ENCODE measurements at regions of chr22 and their contacts with region 1.

Region 1: GRCh38 chr22:40818747-40819598 is at the start of gene SLC25A17:
- DNase-seq: peak; percentile 72 to 93 (median 88)
- ATAC-seq: peak; percentile 88
- H3K4me3 ChIP-seq: peak within 1 kb of the TSS; percentile 87 to 91
- H3K4me3 Mint-ChIP-seq: peak within 1 kb of the TSS; percentile 96
- H3K27ac ChIP-seq: peak within 1 kb of the TSS; percentile 69 to 81
- H3K27ac Mint-ChIP-seq: peak within 1 kb of the TSS; percentile 88
- H3K4me1 ChIP-seq: peaks cover 18% of the 10 kb centered on the region
- H3K4me1 Mint-ChIP-seq: peaks cover 41% of the 10 kb centered on the region
- H3K27me3 ChIP-seq: no peaks in the 10 kb centered on the region
- H3K27me3 Mint-ChIP-seq: no peaks in the 10 kb centered on the region
- CTCF ChIP-seq: no peak
- total RNA-seq, gene SLC25A17: 3.2 to 4.0 TPM

Region 2: DNA sequence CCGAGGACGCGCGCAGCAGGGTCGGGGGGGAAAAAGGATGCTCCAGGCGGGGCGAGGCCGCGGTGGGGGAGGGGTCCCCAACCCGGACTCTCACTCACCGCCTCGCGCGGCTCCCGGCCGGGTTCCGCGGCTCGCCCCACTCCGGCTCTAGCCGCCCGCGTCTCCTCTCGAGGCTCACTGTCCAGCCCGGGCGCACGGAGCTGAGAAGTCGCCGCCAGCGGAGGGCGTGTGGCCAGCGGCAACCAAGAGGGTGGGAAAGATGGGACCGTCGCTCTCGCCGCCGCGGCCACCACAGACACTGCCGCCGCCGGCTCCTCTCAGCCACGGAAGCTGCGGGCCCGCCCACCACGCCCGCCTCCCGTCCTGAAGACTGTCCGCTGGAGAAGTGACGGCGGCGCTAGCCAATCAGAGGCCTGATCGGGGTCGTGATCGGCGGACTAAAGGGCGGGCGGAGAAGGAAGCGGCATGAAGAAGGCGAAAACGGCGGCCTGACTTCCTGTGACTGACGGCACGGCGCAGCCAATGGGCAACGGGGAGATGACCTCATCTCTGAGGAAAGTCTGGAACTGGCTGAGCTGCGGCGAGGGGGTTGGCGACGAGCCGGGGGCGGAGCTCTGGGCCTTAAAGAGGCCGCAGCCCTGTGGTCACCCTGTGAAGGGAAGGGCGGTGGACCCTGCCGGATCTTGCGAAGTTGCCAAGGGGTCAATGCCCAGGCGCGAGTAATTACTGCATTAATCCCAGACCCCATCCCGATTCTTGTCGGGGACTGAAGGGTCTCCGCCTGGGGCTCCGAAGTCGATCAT is 182.4 kb before region 1 on chr22 and contains the start of gene MRTFA:
- CTCF ChIA-PET with region 1: no interaction called
- POLR2A ChIA-PET with region 1: no interaction called
- intact Hi-C with region 1: loop called (anchors 1 kb)
- DNase-seq: peak; percentile 98 to 100 (median 99)
- ATAC-seq: peak; percentile 93
- H3K4me3 ChIP-seq: peak within 1 kb of the TSS; percentile 98 to 100
- H3K4me3 Mint-ChIP-seq: peak within 1 kb of the TSS; percentile 99
- H3K27ac ChIP-seq: peak within 1 kb of the TSS; percentile 89
- H3K27ac Mint-ChIP-seq: peak within 1 kb of the TSS; percentile 98
- H3K4me1 ChIP-seq: peaks cover 34% of the 10 kb centered on the region
- H3K4me1 Mint-ChIP-seq: peaks cover 45% of the 10 kb centered on the region
- H3K27me3 ChIP-seq: no peaks in the 10 kb centered on the region
- H3K27me3 Mint-ChIP-seq: no peaks in the 10 kb centered on the region
- CTCF ChIP-seq: no peak
- total RNA-seq, gene MRTFA: 53.7 to 56.7 TPM

Region 3: DNA sequence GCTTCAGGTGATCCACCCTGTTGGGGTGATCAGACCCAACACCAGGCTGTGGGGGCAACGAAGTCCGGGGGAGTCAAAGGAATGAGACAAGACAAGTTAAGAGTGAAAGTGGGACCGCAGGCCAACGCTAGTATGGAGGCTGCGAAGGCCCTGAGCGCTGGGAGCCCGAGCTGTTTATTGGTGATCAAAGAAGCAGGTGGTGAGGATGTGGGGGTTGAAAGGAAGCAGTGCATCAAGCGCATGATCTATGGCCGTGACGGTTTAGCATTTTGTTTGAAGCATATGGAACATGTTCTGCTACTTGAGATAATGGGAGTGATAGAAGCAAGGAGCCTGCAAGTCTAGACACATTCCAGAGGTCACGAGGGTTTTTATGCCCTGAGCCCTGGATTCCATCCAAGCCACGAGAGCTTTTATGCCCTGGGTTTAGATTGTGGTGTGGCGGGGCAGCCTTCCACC is 90.2 kb before region 1 on chr22:
- CTCF ChIA-PET with region 1: no interaction called
- POLR2A ChIA-PET with region 1: no interaction called
- intact Hi-C with region 1: loop called in 1 of 2 experiments (anchors 2 kb)
- DNase-seq: peak; percentile 44 to 84 (median 62)
- ATAC-seq: peak; percentile 58
- H3K4me3 ChIP-seq: no peak overlapping the region
- H3K4me3 Mint-ChIP-seq: peak overlapping the region; percentile 62
- H3K27ac ChIP-seq: peak overlapping the region; percentile 59 to 67
- H3K27ac Mint-ChIP-seq: peak overlapping the region; percentile 98
- H3K4me1 ChIP-seq: peaks cover 62% of the 10 kb centered on the region
- H3K4me1 Mint-ChIP-seq: peaks cover 51% of the 10 kb centered on the region
- H3K27me3 ChIP-seq: no peaks in the 10 kb centered on the region
- H3K27me3 Mint-ChIP-seq: no peaks in the 10 kb centered on the region
- CTCF ChIP-seq: no peak

Region 4: GRCh38 chr22:41301105-41302020 is 482.4 kb after region 1 on chr22 and contains the start of gene ZC3H7B:
- CTCF ChIA-PET with region 1: no interaction called
- POLR2A ChIA-PET with region 1: no interaction called
- intact Hi-C with region 1: loop called in 1 of 2 experiments (anchors 1 kb)
- DNase-seq: peak; percentile 64 to 94 (median 81)
- ATAC-seq: peak; percentile 93
- H3K4me3 ChIP-seq: peak within 1 kb of the TSS; percentile 81 to 96
- H3K4me3 Mint-ChIP-seq: peak within 1 kb of the TSS; percentile 83
- H3K27ac ChIP-seq: peak within 1 kb of the TSS; percentile 72 to 80
- H3K27ac Mint-ChIP-seq: peak within 1 kb of the TSS; percentile 95
- H3K4me1 ChIP-seq: peaks cover 16% of the 10 kb centered on the region
- H3K4me1 Mint-ChIP-seq: peaks cover 29% of the 10 kb centered on the region
- H3K27me3 ChIP-seq: no peaks in the 10 kb centered on the region
- H3K27me3 Mint-ChIP-seq: no peaks in the 10 kb centered on the region
- CTCF ChIP-seq: peak; percentile 43
- total RNA-seq, gene ZC3H7B: 30.7 to 30.8 TPM

Region 5: DNA sequence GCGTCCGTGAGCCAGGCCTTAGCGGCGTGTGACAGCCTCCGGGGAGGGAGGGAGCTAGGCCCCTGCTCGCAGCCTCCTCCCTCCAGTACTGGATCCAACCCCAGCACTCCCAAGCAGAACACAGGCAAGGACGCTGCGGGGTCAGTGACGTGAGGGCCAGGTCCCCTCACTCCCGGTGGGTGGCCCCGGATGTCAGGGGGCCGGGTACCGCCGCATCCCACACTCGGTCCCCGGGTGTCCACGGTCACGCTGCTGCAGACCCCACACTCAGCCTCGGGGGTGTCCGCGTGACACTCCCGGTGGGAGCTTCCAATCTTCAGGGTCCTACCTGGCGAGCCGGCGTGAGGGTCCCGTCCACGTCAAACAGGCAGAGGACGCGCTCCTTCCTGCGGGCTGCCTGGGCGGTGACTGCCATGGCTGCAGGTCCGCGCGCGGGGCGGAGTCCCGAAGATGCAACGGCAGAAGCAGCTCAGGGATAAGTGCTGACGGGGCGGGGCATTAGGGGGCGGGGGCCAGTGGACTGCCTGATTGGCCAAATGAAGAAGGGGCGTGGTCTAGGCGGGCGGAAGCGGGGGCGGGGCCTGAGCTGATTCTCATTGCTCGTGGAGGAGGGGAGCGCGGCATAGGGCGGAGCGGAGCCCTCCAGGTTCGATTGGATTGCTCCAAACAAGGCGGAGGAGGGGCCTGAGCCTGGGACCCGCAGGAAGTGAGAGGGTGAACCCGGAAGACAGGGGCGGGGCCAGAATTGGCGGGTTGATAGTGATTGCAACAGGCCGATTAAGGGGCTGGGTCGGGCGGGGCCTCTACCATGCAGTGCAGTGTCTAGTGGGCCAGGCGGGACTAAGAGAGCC is 770.6 kb after region 1 on chr22 and contains the start of gene PMM1:
- CTCF ChIA-PET with region 1: no interaction called
- POLR2A ChIA-PET with region 1: no interaction called
- intact Hi-C with region 1: loop called in 1 of 2 experiments (anchors 1 kb)
- DNase-seq: peak; percentile 100
- ATAC-seq: peak; percentile 97
- H3K4me3 ChIP-seq: peak within 1 kb of the TSS; percentile 94 to 98
- H3K4me3 Mint-ChIP-seq: peak within 1 kb of the TSS; percentile 92
- H3K27ac ChIP-seq: peak within 1 kb of the TSS; percentile 50 to 75
- H3K27ac Mint-ChIP-seq: peak within 1 kb of the TSS; percentile 88
- H3K4me1 ChIP-seq: peaks cover 17% of the 10 kb centered on the region
- H3K4me1 Mint-ChIP-seq: peaks cover 20% of the 10 kb centered on the region
- H3K27me3 ChIP-seq: no peaks in the 10 kb centered on the region
- H3K27me3 Mint-ChIP-seq: no peaks in the 10 kb centered on the region
- CTCF ChIP-seq: no peak
- total RNA-seq, gene PMM1: 19.1 to 22.4 TPM

Measured in CD8-positive, alpha-beta T cell (primary cell).